Endothelial cell of umbilical vein (primary cell): ENCODE measurements at regions of chr10 and their contacts with region 1.

Region 1: GRCh38 chr10:77391605-77392235 is 245.9 kb downstream of the KCNMA1 start:
- DNase-seq: peak; percentile 63
- H3K4me3 ChIP-seq: no peak overlapping the region
- H3K27ac ChIP-seq: peak overlapping the region; percentile 90
- H3K4me1 ChIP-seq: peaks cover 48% of the 10 kb centered on the region
- H3K27me3 ChIP-seq: no peaks in the 10 kb centered on the region
- CTCF ChIP-seq: peak; percentile 56 to 57
- POLR2A ChIP-seq: no peak

Region 2: DNA sequence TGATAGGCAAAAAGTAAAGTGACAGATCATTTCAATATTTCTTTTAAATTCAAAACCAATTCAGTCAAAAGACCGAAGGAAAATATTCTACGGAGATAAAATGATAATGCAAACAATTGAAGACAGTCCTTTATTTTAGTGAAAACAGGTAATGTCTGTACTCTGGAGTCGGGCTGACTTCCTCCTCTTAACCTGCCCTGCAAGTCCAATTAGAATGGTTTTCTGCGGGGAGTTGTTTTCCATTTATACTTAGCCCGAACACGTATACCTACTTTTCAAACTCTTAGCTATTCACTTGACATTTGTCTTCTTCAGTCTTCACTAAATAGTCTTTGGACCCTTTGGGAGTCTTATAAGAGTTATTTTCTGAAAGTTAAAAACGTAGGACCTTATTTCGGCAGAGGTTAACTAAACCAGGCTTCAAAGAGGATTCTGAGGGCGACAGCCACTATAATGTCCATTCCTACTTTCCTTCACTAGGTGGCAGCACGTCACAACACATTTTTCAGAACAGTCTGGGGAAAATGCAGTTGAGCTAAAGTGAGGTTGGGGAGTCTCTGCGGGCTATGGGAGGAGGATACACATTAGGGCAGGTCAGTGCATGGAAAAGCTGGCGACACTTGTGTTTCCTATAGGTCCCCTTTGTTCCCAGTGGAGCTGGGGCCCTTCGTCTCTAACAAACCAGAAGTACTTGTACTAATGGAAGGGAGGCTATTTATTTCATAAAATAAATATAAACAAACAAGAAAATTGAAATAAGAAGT is 226.1 kb before region 1 on chr10:
- CTCF ChIA-PET with region 1: interaction called, 16 read pairs
- POLR2A ChIA-PET with region 1: no interaction called
- dilution Hi-C with region 1: no loop called
- intact Hi-C with region 1: loop called (anchors 2 kb)
- DNase-seq: peak; percentile 77
- H3K4me3 ChIP-seq: no peak overlapping the region
- H3K27ac ChIP-seq: peak overlapping the region; percentile 80
- H3K4me1 ChIP-seq: peaks cover 41% of the 10 kb centered on the region
- H3K27me3 ChIP-seq: no peaks in the 10 kb centered on the region
- CTCF ChIP-seq: peak; percentile 59 to 66
- POLR2A ChIP-seq: no peak

Region 3: GRCh38 chr10:77251297-77252013 is 140.3 kb before region 1 on chr10:
- CTCF ChIA-PET with region 1: interaction called, 6 read pairs
- POLR2A ChIA-PET with region 1: no interaction called
- dilution Hi-C with region 1: no loop called
- intact Hi-C with region 1: loop called (anchors 5 kb)
- DNase-seq: peak; percentile 55
- H3K4me3 ChIP-seq: no peak overlapping the region
- H3K27ac ChIP-seq: no peak overlapping the region
- H3K4me1 ChIP-seq: no peaks in the 10 kb centered on the region
- H3K27me3 ChIP-seq: peaks cover 0 to 2% of the 10 kb centered on the region in 2 experiments
- CTCF ChIP-seq: peak; percentile 67 to 72
- POLR2A ChIP-seq: no peak

Region 4: DNA sequence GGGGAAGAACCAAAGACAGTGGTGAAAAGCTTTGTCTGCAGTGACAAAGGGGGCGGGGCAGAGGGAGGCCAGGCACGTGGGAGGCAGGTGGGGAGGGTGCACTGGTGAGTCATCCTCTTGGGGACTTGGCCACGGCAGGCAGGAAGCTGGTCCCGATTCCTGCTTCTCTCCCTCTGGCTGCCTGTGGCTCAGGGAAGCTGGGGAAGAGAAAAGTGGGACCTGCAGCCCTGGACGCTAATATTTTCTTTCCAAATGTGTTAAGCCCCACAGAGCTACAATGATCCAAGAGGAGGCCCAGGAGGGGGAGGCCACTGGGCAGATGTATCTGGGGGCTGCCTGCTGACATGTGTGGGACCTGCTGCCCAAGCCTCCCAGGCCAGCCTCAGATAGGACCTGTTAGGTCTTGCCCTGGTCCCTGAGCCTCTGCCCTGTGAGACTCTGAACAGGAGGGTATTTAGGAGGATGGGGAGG is 14.1 kb after region 1 on chr10:
- CTCF ChIA-PET with region 1: interaction called, 7 read pairs
- POLR2A ChIA-PET with region 1: interaction called, 4 read pairs
- dilution Hi-C with region 1: no loop called
- intact Hi-C with region 1: loop called (anchors 1 kb)
- DNase-seq: peak; percentile 51
- H3K4me3 ChIP-seq: no peak overlapping the region
- H3K27ac ChIP-seq: no peak overlapping the region
- H3K4me1 ChIP-seq: peaks cover 4% of the 10 kb centered on the region
- H3K27me3 ChIP-seq: no peaks in the 10 kb centered on the region
- CTCF ChIP-seq: no peak
- POLR2A ChIP-seq: no peak

Region 5: GRCh38 chr10:77531441-77532001 is 139.8 kb after region 1 on chr10:
- CTCF ChIA-PET with region 1: interaction called, 3 read pairs
- POLR2A ChIA-PET with region 1: no interaction called
- dilution Hi-C with region 1: no loop called
- intact Hi-C with region 1: loop called (anchors 5 kb)
- DNase-seq: peak; percentile 58
- H3K4me3 ChIP-seq: no peak overlapping the region
- H3K27ac ChIP-seq: no peak overlapping the region
- H3K4me1 ChIP-seq: peaks cover 6% of the 10 kb centered on the region
- H3K27me3 ChIP-seq: no peaks in the 10 kb centered on the region
- CTCF ChIP-seq: no peak
- POLR2A ChIP-seq: no peak

Region 6: DNA sequence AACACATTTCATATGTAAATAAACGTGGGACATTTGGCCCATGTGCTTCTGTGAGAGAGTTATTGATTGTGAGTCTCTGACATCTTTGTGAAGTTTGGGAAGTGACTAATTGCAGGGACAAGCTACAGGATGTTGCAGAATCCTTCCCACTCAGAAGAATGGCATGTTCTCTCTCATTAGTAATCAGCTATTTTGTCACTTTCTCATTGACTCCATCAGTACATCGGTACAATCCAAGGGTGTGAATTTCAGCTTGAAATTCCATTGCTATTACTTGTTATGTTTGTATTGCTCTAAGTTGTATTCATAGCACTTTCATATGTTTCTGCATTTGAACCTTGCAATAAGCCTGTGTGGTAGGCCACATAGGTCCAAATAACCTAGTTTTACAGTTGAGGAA is 345.9 kb after region 1 on chr10:
- CTCF ChIA-PET with region 1: interaction called, 3 read pairs
- POLR2A ChIA-PET with region 1: no interaction called
- dilution Hi-C with region 1: no loop called
- intact Hi-C with region 1: loop called (anchors 2 kb)
- DNase-seq: peak; percentile 94
- H3K4me3 ChIP-seq: no peak overlapping the region
- H3K27ac ChIP-seq: peak overlapping the region; percentile 90
- H3K4me1 ChIP-seq: peaks cover 20% of the 10 kb centered on the region
- H3K27me3 ChIP-seq: no peaks in the 10 kb centered on the region
- CTCF ChIP-seq: no peak
- POLR2A ChIP-seq: peak; percentile 37